Spleen (tissue), 13 donors: ENCODE measurements at regions of chr4 and their contacts with region 1.

Region 1: GRCh38 chr4:186297013-186297645 is 31.1 kb downstream of the F11 start:
- DNase-seq: no peak
- H3K4me3 ChIP-seq: no peak overlapping the region
- H3K27ac ChIP-seq: no peak overlapping the region
- H3K4me1 ChIP-seq: peaks cover 0 to 7% (median 0%) of the 10 kb centered on the region in 6 donors
- H3K27me3 ChIP-seq: peaks cover 0 to 56% (median 12%) of the 10 kb centered on the region in 7 donors
- CTCF ChIP-seq: peak in 9 of 11 experiments; percentile 30 to 59 (median 56)
- POLR2A ChIP-seq: no peak

Region 2: DNA sequence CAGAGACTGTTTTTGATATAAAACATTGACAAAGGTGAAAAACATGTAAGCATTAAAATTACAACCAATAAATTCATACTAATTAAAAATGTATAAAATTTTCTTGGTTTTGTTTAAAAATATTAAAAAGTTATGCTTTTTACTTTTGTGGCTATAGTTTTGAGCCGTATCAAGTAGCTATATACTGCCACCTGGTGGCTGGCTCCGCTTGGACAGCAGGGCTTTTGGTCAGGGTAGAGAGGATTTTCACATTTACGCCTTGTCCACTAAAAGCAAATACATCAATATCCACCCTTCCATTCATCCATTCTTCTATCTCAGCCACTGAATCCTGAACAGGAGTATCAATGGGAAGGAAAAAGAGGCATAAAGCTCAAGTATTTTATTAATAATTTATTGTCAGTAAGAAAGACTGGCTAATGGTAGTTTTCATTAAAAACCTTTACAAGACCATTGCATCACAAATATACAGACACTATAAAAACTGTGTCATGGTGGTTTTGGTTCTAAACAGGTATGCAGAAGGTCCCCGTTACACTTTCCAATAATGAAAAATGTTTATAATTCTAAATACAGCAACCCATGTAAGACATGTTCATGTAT is 290.4 kb after region 1 on chr4:
- intact Hi-C with region 1: loop called (anchors 2 kb)
- DNase-seq: no peak
- H3K4me3 ChIP-seq: no peak overlapping the region
- H3K27ac ChIP-seq: no peak overlapping the region
- H3K4me1 ChIP-seq: no peaks in the 10 kb centered on the region
- H3K27me3 ChIP-seq: no peaks in the 10 kb centered on the region
- CTCF ChIP-seq: peak; percentile 49 to 89 (median 68)
- POLR2A ChIP-seq: no peak